ENCODE measurements at regions of chr16 and their contacts with region 1.

Region 1: GRCh38 chr16:9159839-9160550 is 68.6 kb downstream of the HAPSTR1 start:
- DNase-seq: peak in 1 of 3 donors; percentile 18
- H3K4me3 ChIP-seq: no peak overlapping the region
- H3K4me3 Mint-ChIP-seq: no peak overlapping the region
- H3K27ac ChIP-seq: no peak overlapping the region
- H3K27ac Mint-ChIP-seq: no peak overlapping the region
- H3K4me1 ChIP-seq: no peaks in the 10 kb centered on the region
- H3K4me1 Mint-ChIP-seq: no peaks in the 10 kb centered on the region
- H3K27me3 ChIP-seq: no peaks in the 10 kb centered on the region
- H3K27me3 Mint-ChIP-seq: peaks cover 7 to 25% (median 16%) of the 10 kb centered on the region in 3 donors
- CTCF ChIP-seq: peak; percentile 48

Region 2: DNA sequence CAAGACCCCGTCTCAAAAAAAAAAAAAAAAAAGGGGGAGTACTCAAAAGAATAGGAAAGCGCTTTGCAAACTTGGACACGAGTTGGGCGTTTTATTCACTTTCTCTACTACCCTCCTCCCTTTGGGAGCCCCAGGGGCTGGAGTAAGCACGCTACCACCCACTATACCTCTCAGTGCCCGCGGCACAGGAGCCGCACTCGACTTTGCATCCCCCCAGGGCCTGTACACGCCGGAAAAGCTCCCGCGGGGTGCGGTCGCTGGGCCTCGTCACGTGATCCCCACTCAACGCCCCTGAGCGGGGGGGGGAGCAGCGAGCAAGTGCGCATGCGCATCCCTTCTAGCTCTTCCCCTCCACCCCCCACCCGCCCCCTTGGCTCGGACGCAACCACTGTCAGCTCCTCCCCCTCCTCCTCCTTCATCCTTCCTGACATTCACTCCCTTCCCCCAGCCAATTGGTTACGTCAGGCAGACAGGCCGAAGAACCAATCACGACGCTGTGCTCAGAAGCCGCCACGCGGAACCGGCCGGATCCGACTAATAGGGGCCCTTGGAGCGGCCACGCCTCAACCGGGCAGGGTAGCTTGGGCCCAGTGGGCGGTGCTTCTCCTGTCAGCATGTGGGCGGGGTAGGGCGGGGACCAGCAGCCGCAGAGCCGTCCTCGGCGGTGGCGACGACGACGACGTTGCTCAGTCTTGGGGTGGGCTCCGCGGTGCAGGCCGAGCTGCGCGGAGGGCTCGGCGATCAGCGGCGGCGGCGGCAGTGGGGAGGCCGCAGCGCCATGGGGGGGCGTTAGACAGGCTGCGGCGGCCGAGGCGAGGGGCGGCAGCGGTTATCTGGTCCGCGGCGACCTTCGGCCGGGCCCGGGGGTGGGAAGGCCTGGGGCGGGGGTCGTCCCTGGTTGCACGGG is 68.8 kb before region 1 on chr16 and contains the start of gene HAPSTR1:
- intact Hi-C with region 1: no loop called
- DNase-seq: peak; percentile 100
- H3K4me3 ChIP-seq: peak within 1 kb of the TSS; percentile 76 to 100 (median 98)
- H3K4me3 Mint-ChIP-seq: peak within 1 kb of the TSS; percentile 99
- H3K27ac ChIP-seq: peak within 1 kb of the TSS; percentile 91 to 93
- H3K27ac Mint-ChIP-seq: peak within 1 kb of the TSS; percentile 93 to 99 (median 97)
- H3K4me1 ChIP-seq: peaks cover 36 to 44% of the 10 kb centered on the region in 2 donors
- H3K4me1 Mint-ChIP-seq: peaks cover 23% of the 10 kb centered on the region
- H3K27me3 ChIP-seq: no peaks in the 10 kb centered on the region
- H3K27me3 Mint-ChIP-seq: peaks cover 0 to 4% (median 2%) of the 10 kb centered on the region in 3 donors
- CTCF ChIP-seq: no peak
- polyA plus RNA-seq, gene HAPSTR1: 7.2 to 58.9 (median 11.1) TPM

Region 3: GRCh38 chr16:9225611-9226316 is 65.8 kb after region 1 on chr16:
- intact Hi-C with region 1: no loop called
- DNase-seq: no peak
- H3K4me3 ChIP-seq: no peak overlapping the region
- H3K4me3 Mint-ChIP-seq: no peak overlapping the region
- H3K27ac ChIP-seq: no peak overlapping the region
- H3K27ac Mint-ChIP-seq: no peak overlapping the region
- H3K4me1 ChIP-seq: no peaks in the 10 kb centered on the region
- H3K4me1 Mint-ChIP-seq: no peaks in the 10 kb centered on the region
- H3K27me3 ChIP-seq: no peaks in the 10 kb centered on the region
- H3K27me3 Mint-ChIP-seq: peaks cover 4 to 6% (median 5%) of the 10 kb centered on the region in 3 donors
- CTCF ChIP-seq: no peak

Region 4: GRCh38 chr16:10181196-10182162 is 1021.5 kb after region 1 on chr16:
- intact Hi-C with region 1: loop called in 1 of 2 experiments (anchors 10 kb)
- DNase-seq: peak in 1 of 3 donors; percentile 19
- H3K4me3 ChIP-seq: no peak overlapping the region
- H3K4me3 Mint-ChIP-seq: peak overlapping the region; percentile 24 to 72
- H3K27ac ChIP-seq: no peak overlapping the region
- H3K27ac Mint-ChIP-seq: no peak overlapping the region
- H3K4me1 ChIP-seq: peaks cover 0 to 4% of the 10 kb centered on the region in 2 donors
- H3K4me1 Mint-ChIP-seq: peaks cover 7% of the 10 kb centered on the region
- H3K27me3 ChIP-seq: peaks cover 32 to 50% of the 10 kb centered on the region in 2 donors
- H3K27me3 Mint-ChIP-seq: peaks cover 53 to 71% (median 63%) of the 10 kb centered on the region in 3 donors
- CTCF ChIP-seq: peak; percentile 83